ENCODE measurements at regions of chr17 and their contacts with region 1.

Region 1: DNA sequence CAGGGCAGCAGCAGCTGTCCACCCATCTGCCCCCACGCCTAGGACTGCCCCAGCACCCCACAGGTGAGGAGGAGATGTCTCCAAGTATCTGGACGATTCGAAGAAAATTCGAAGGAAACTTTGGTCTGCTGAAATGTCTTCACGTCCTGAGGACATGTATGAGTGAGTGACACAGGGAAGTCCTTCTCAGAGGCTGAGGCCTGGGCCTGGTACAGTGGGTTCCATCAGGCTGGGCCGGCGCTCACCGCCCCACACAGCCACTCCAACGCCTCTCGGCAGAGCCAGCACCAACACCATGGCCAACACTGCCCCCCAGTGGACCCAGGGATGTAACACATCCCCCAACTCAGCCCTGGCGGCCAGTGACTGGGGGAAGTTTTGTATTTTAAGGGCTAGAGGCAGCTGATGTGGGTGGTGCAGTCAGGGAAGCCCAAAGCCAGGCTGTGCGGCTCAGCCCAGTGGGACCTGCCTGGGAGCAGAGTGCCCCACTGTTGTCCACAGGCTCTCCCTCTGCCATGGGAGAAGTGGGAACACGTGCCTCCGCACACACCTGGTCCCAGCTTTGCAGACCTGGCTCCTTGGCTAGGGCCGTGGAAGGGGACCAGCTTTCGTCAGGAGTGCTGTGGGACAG is 55.8 kb upstream of the FASN start:
- DNase-seq: peak; percentile 84
- ATAC-seq: peak; percentile 98
- H3K4me3 Mint-ChIP-seq: no peak overlapping the region
- H3K27ac Mint-ChIP-seq: no peak overlapping the region
- H3K4me1 Mint-ChIP-seq: peaks cover 2% of the 10 kb centered on the region
- H3K27me3 Mint-ChIP-seq: no peaks in the 10 kb centered on the region

Region 2: DNA sequence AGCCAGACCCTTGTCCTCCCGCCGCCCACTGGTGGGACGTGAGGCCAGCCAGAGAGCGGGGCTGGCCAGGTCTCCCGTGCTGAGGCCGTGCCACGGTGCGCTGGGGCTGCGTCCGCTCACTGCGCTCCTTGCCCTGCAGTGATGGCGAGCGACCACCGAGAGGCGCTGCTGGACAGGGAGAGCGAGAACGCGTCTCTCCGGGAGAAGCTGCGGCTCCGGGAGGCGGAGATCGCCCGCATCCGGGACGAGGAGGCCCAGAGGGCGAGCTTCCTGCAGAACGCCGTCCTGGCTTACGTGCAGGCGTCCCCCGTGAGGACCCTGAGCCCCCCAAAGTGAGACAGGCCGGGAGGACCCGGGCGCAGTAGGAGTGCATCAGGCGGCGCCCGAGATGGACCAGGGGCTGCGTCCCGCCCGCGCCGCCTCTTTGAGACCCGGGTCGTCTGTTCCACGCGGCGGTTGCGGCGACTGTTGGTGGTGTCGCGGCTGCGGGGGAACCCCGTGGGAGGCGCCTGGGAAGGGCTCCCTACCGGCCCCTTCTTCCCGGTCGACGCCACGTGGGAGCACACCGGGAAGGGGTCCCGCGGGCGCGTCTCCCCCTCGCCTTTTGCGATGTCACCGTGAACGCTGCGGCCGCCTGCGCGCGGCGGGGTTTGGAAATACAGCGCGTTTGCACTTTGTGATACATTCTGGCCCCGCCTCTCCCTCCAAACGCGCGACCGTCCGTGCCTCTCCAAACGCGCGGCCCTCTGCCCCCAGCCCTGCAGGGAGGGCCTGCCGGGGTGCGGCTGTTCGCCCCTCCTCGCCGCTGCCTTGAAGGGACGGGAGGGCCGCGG is 123.2 kb before region 1 on chr17:
- CTCF ChIA-PET with region 1: interaction called, 56 read pairs
- DNase-seq: peak; percentile 88
- ATAC-seq: peak; percentile 71
- H3K4me3 Mint-ChIP-seq: peak overlapping the region; percentile 70
- H3K27ac Mint-ChIP-seq: peak overlapping the region; percentile 59
- H3K4me1 Mint-ChIP-seq: peaks cover 28% of the 10 kb centered on the region
- H3K27me3 Mint-ChIP-seq: no peaks in the 10 kb centered on the region

Measured in activated CD8-positive, alpha-beta memory T cell treated with anti-CD3 and anti-CD28 coated beads, Interleukin-2, amount 10 ng/mL, durations not matched to agents 7 days and 5 days (primary cell).